ENCODE measurements at regions of chr18 and their contacts with region 1.

Region 1: DNA sequence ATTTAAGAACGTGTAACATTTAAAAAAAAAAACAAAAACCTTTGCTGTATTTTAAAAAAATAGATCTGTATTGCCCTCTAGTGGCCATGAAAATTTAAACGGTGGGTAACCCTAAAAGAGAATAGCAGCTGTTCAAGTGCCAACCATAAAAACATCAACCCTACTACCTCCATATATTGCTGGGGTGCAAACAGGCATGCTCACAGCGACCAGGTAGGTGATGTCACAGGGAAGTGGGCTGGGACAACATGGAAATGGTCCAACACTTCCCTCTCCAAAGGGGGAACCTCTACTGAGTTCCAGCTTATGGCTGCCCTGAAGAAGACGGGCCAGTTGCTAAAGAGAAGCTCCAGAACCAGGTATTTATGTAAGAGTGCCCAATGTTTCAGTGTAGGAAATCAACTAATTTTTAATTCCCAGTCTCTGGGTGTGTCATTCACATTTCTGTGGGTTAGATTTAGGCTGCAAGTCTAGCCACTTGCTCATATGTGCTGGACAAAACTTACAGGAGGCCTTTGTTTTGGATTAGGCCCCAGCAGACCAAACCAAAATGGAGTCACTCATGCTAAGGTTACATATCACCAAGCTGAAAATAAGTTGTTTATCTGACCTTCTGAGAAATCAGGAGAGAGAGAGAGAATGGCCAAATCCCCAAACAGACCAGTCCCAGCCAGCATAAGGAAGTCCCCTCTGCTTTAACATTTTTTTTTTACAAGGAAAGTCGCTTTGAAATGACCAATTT is 54.5 kb downstream of the SKA1 start:
- DNase-seq: no peak
- H3K4me3 Mint-ChIP-seq: no peak overlapping the region
- H3K27ac Mint-ChIP-seq: no peak overlapping the region
- H3K4me1 Mint-ChIP-seq: no peaks in the 10 kb centered on the region
- H3K27me3 Mint-ChIP-seq: peaks cover under 1% of the 10 kb centered on the region

Region 2: GRCh38 chr18:50009773-50010335 is 419.5 kb before region 1 on chr18:
- CTCF ChIA-PET with region 1: no interaction called
- intact Hi-C with region 1: loop called (anchors 5 kb)
- DNase-seq: peak; percentile 67
- H3K4me3 Mint-ChIP-seq: no peak overlapping the region
- H3K27ac Mint-ChIP-seq: no peak overlapping the region
- H3K4me1 Mint-ChIP-seq: no peaks in the 10 kb centered on the region
- H3K27me3 Mint-ChIP-seq: no peaks in the 10 kb centered on the region

Region 3: DNA sequence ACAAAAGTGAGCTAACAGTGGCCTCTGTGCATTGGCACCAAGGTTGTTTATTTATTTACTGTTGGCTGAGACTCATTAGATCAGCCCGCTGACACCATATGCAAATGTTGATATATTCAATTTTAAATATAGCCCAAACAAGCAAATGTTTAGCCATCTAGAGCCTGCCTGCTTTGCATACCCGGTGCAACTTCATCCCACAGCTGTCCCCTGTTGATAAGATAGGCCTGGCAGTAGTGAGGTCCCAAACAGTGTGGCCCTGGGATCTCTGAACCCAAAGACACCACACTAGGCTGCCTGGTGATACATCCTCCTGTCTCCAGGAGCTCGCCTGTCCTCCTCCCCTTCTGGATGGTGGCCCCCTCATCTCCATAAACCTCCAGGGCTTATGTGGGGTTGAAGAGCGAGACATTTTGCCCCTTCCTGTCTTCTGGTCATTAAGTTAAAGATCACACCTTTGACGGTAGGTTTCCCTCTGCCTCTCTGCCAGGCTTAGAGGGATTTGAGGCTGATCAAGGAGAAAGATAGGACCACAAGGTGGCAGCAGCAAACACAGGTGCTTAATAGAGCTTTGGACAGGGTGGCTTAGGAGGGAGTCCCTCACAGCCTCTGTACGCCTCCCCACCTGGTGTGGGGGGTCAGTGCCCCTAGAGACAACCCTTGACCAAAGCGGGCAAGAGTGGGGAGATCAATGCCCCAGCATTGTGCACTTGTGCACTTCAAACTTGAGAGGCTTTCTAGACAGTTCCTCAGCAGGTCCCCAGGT is 210.8 kb before region 1 on chr18:
- CTCF ChIA-PET with region 1: interaction called, 7 read pairs
- intact Hi-C with region 1: loop called (anchors 1 kb)
- DNase-seq: peak; percentile 59
- H3K4me3 Mint-ChIP-seq: no peak overlapping the region
- H3K27ac Mint-ChIP-seq: no peak overlapping the region
- H3K4me1 Mint-ChIP-seq: no peaks in the 10 kb centered on the region
- H3K27me3 Mint-ChIP-seq: peaks cover 18% of the 10 kb centered on the region